Calu3 (cell line): ENCODE measurements at regions of chr19 and their contacts with region 1.

Region 1: DNA sequence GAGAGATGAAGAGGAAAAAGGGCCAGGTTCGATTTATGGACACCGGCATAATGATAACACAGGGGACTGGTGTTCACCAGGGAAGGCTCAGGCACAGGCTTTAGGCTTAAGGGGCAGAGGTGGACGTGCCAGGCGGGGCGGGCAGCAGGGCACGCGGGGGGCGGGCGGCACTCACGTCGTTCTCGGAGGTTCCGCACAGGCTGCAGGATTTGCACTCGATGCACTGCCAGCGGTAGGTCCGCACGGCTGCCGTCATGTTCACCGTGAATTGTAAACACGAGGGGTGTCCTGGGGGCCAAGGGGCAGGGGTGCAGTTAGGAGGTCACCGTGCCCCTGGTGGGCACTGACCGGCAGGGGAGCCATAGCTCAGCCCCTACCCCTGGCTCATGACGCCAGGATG is 10.6 kb downstream of the DPF1 start:
- DNase-seq: no peak
- H3K4me3 Mint-ChIP-seq: no peak overlapping the region
- H3K27ac Mint-ChIP-seq: no peak overlapping the region
- H3K4me1 Mint-ChIP-seq: peaks cover 10% of the 10 kb centered on the region
- H3K27me3 Mint-ChIP-seq: peaks cover 44% of the 10 kb centered on the region
- CTCF ChIP-seq: no peak

Region 2: DNA sequence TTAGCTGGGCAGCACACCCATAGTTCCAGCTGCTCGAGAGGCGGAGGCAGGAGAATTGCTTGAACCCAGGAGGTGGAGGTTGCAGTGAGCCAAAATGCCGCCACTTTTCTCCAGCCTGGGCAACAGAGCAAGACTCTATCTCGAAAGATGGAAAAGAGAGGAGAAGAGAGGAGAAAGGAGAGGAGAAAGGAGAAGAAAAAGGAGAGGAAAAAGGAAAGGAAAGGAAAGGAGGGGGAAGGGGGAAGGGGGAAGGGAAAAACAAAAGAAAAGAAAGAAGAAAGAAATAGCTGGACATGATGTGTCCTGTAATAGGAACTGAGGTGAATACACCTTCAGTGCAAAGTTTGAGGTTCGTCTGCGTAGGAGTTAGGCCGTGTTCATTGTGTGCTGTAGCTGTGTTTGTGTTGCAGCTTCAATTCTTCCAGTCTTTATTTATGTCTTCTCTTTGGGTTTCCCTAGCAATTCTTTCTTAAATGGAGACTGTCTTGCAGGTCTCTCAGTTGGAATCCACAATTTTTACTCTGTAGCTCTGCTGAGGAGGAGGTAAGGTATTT is 507.3 kb before region 1 on chr19:
- CTCF ChIA-PET with region 1: interaction called, 12 read pairs
- intact Hi-C with region 1: no loop called
- DNase-seq: no peak
- H3K4me3 Mint-ChIP-seq: no peak overlapping the region
- H3K27ac Mint-ChIP-seq: no peak overlapping the region
- H3K4me1 Mint-ChIP-seq: no peaks in the 10 kb centered on the region
- H3K27me3 Mint-ChIP-seq: no peaks in the 10 kb centered on the region
- CTCF ChIP-seq: no peak

Region 3: DNA sequence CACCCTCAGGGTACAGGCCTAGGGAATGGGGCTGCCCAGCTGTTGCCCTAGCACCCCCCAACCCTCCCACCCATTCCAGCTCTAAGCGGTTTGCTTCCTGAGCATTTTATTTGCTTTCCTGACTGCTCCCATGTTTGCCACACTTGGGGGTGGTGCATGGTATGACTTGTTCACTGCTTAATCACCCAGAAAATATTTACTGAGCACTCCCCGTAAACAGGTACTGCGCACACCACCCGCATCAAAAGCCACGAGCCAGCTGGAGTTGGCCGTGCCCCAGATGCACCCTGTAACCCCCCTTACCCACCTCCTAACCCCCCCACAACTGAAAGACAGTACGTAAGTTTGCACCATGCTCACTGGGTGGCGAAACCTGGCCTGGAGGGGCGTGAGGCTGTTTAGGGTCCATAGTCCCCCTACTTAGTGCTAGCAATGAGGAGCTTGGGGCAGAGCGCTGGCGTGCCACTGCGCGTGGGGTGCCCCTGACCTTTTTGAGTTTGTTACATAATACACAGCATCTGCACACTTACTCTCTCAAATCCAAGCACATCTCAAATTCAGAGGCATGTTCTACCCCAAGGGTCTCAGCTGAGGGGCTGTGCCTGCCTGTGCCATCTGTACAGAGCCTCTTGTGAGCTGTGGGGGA is 19.3 kb before region 1 on chr19:
- CTCF ChIA-PET with region 1: no interaction called
- intact Hi-C with region 1: no loop called
- DNase-seq: no peak
- H3K4me3 Mint-ChIP-seq: no peak overlapping the region
- H3K27ac Mint-ChIP-seq: no peak overlapping the region
- H3K4me1 Mint-ChIP-seq: no peaks in the 10 kb centered on the region
- H3K27me3 Mint-ChIP-seq: no peaks in the 10 kb centered on the region
- CTCF ChIP-seq: no peak